CD4-positive, alpha-beta T cell (primary cell): ENCODE measurements at regions of chr2 and their contacts with region 1.

Region 1: GRCh38 chr2:65382776-65383357 is 49.5 kb downstream of the SPRED2 start:
- DNase-seq: peak; percentile 38 to 87 (median 64)
- ATAC-seq: peak; percentile 92
- H3K4me3 ChIP-seq: peak overlapping the region; percentile 20
- H3K4me3 Mint-ChIP-seq: peak overlapping the region; percentile 77
- H3K27ac ChIP-seq: no peak overlapping the region
- H3K27ac Mint-ChIP-seq: peak overlapping the region; percentile 82
- H3K4me1 ChIP-seq: peaks cover 25% of the 10 kb centered on the region
- H3K4me1 Mint-ChIP-seq: peaks cover 22% of the 10 kb centered on the region
- H3K27me3 ChIP-seq: no peaks in the 10 kb centered on the region
- H3K27me3 Mint-ChIP-seq: no peaks in the 10 kb centered on the region
- CTCF ChIP-seq: peak; percentile 39

Region 2: DNA sequence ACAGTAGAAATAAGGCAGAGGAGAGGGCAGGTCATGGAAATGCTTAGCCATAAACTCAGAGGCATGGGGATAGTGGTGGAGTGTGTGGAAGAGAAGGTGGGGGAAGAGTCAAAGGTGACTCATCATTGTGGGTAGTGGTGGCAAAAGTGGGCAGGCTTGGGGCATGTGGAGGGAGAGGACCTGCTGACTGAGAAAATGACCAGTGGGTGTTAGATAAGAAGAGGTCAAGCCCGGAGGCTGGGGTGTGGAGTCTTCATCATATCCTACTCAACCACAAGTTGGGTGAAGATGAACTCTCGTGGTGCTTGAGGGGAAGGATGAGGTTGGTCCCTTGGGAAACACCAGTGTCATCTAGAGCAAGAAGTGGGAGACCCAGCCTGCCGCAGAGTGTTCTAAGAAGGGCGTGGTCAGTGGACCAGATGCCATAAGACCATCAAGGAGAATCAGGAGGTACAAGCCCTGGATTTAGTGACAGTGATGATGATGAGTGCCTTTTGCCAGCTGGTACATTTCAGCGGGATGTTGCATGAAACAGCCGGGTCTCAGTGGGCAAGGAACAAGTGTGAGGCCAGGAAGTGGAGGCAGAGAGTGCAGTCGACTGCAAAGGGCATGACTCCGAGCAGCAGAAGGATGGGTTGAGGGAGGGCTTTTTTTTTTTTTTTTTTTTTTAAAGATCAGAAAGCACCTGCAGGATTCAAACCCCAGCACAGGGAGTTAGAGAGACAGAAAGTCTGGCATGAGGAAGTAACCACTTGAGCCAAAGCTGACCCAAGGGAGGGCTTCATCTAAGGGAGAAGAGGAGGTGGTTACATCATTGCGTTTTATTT is 172.1 kb after region 1 on chr2:
- CTCF ChIA-PET with region 1: no interaction called
- POLR2A ChIA-PET with region 1: no interaction called
- intact Hi-C with region 1: loop called (anchors 1 to 5 kb)
- DNase-seq: peak in 1 of 14 experiments; percentile 3
- ATAC-seq: no peak
- H3K4me3 ChIP-seq: no peak overlapping the region
- H3K4me3 Mint-ChIP-seq: no peak overlapping the region
- H3K27ac ChIP-seq: no peak overlapping the region
- H3K27ac Mint-ChIP-seq: no peak overlapping the region
- H3K4me1 ChIP-seq: peaks cover 4% of the 10 kb centered on the region
- H3K4me1 Mint-ChIP-seq: no peaks in the 10 kb centered on the region
- H3K27me3 ChIP-seq: no peaks in the 10 kb centered on the region
- H3K27me3 Mint-ChIP-seq: peaks cover 4% of the 10 kb centered on the region
- CTCF ChIP-seq: no peak

Region 3: DNA sequence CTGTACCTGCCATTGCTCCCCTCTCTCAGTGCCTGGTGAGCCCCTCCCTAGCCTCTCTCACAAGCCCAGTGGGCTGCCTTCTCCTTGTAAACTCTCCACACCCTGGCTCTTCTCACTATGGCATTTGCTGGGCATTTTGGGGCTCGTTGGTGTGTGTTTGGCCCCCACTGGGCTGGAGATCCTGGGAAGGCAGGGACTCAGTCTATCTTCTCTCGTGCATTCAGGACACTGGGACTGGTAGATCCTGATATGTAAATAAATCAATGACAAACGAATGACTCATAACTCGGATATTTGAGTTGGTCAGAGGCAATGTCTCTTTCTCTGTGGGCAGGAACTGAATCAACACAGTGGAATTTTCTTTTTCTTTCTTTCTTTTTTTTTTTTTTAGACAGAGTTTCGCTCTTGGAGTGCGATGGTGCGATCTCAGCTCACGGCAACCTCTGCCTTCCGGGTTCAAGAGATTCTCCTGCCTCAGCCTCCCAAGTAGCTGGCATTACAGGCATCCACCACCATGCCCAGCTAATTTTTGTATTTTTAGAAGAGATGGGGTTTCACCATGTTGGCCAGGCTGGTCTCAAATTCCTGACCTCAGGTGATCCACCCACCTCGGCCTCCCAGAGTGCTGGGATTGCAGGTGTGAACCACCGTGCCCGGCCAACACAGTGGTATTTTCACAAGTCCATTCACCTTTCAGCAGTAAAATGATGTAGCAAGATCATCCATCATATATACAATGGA is 194.2 kb after region 1 on chr2:
- CTCF ChIA-PET with region 1: no interaction called
- POLR2A ChIA-PET with region 1: no interaction called
- intact Hi-C with region 1: loop called (anchors 5 kb)
- DNase-seq: no peak
- ATAC-seq: no peak
- H3K4me3 ChIP-seq: no peak overlapping the region
- H3K4me3 Mint-ChIP-seq: no peak overlapping the region
- H3K27ac ChIP-seq: no peak overlapping the region
- H3K27ac Mint-ChIP-seq: no peak overlapping the region
- H3K4me1 ChIP-seq: no peaks in the 10 kb centered on the region
- H3K4me1 Mint-ChIP-seq: no peaks in the 10 kb centered on the region
- H3K27me3 ChIP-seq: no peaks in the 10 kb centered on the region
- H3K27me3 Mint-ChIP-seq: peaks cover 18% of the 10 kb centered on the region
- CTCF ChIP-seq: no peak